A673 (cell line): ENCODE measurements at regions of chr11 and their contacts with region 1.

Region 1: GRCh38 chr11:72848846-72849466 is 34.7 kb downstream of the ATG16L2 start:
- DNase-seq: peak; percentile 60
- H3K4me3 ChIP-seq: no peak overlapping the region
- H3K27ac ChIP-seq: no peak overlapping the region
- H3K4me1 ChIP-seq: no peaks in the 10 kb centered on the region
- H3K27me3 ChIP-seq: no peaks in the 10 kb centered on the region
- CTCF ChIP-seq: peak; percentile 85

Region 2: DNA sequence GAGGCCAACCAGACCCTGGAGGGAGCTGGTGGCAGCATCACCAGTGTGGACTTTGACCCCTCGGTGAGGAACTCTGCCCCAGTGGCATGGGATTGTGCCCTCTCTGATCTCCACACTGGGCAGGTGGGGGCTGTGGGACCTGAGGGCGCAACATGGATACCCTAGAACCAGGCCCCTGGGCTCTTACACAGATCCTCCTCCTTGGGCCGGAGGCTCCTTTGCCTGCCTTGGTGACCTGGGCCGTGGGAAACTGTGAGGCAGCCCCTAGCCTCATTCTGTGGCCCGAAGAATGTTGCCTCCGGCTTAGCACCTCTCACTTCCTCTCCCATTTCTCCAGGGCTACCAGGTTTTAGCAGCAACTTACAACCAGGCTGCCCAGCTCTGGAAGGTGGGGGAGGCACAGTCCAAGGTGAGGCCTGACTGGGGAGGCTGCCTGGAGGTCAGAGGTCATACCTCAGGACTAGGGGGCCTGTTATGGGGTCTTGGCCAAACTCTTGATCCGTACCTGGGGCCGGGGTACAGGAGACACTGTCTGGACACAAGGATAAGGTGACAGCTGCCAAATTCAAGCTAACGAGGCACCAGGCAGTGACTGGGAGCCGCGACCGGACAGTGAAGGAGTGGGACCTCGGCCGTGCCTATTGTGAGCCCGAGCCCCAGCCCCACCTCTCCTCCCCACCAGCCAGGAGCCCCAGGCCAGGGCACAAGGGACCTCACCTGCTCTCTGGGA is 22.6 kb before region 1 on chr11:
- CTCF ChIA-PET with region 1: interaction called, 11 read pairs
- POLR2A ChIA-PET with region 1: no interaction called
- intact Hi-C with region 1: no loop called
- DNase-seq: no peak
- H3K4me3 ChIP-seq: no peak overlapping the region
- H3K27ac ChIP-seq: no peak overlapping the region
- H3K4me1 ChIP-seq: peaks cover 4% of the 10 kb centered on the region
- H3K27me3 ChIP-seq: no peaks in the 10 kb centered on the region
- CTCF ChIP-seq: no peak